Mammary epithelial cell (primary cell): ENCODE measurements at regions of chr6 and their contacts with region 1.

Region 1: GRCh38 chr6:39980839-39981580 is 46.7 kb upstream of the MOCS1 start:
- DNase-seq: peak; percentile 31
- H3K4me3 ChIP-seq: no peak overlapping the region
- H3K27ac ChIP-seq: no peak overlapping the region
- H3K4me1 ChIP-seq: no peaks in the 10 kb centered on the region
- H3K27me3 ChIP-seq: no peaks in the 10 kb centered on the region
- CTCF ChIP-seq: peak; percentile 47 to 66

Region 2: GRCh38 chr6:39377539-39377950 is 603.5 kb before region 1 on chr6:
- CTCF ChIA-PET with region 1: no interaction called
- dilution Hi-C with region 1: no loop called
- in situ Hi-C with region 1: no loop called
- intact Hi-C with region 1: loop called (anchors 1 kb)
- DNase-seq: peak; percentile 42
- H3K4me3 ChIP-seq: no peak overlapping the region
- H3K27ac ChIP-seq: no peak overlapping the region
- H3K4me1 ChIP-seq: no peaks in the 10 kb centered on the region
- H3K27me3 ChIP-seq: no peaks in the 10 kb centered on the region
- CTCF ChIP-seq: peak; percentile 74 to 90

Region 3: GRCh38 chr6:40054602-40055001 is 73.6 kb after region 1 on chr6:
- CTCF ChIA-PET with region 1: no interaction called
- dilution Hi-C with region 1: loop called (anchors 5 kb)
- in situ Hi-C with region 1: no loop called
- intact Hi-C with region 1: no loop called
- DNase-seq: peak; percentile 75
- H3K4me3 ChIP-seq: no peak overlapping the region
- H3K27ac ChIP-seq: no peak overlapping the region
- H3K4me1 ChIP-seq: peaks cover 10% of the 10 kb centered on the region
- H3K27me3 ChIP-seq: no peaks in the 10 kb centered on the region
- CTCF ChIP-seq: no peak

Region 4: DNA sequence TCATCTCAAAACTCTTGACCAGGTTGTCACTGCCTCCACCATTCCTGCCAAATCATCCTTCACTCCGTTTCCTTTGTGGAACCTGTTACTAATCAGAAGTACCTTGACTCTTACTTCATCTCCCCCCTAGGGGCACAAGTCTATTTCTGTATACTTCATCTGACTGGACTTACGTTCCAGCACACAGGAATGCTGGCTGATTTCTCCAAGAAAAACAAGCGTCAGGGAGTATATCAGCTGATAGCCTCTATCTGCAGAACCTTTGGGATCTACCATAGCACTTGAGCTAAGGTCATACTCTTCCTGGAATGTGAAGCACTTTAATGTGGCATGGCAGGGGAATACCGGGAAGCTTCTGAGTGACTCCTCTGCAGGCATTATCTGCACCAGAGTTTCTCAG is 131.3 kb after region 1 on chr6:
- CTCF ChIA-PET with region 1: no interaction called
- dilution Hi-C with region 1: no loop called
- in situ Hi-C with region 1: no loop called
- intact Hi-C with region 1: no loop called
- DNase-seq: no peak
- H3K4me3 ChIP-seq: no peak overlapping the region
- H3K27ac ChIP-seq: no peak overlapping the region
- H3K4me1 ChIP-seq: no peaks in the 10 kb centered on the region
- H3K27me3 ChIP-seq: no peaks in the 10 kb centered on the region
- CTCF ChIP-seq: no peak

Region 5: DNA sequence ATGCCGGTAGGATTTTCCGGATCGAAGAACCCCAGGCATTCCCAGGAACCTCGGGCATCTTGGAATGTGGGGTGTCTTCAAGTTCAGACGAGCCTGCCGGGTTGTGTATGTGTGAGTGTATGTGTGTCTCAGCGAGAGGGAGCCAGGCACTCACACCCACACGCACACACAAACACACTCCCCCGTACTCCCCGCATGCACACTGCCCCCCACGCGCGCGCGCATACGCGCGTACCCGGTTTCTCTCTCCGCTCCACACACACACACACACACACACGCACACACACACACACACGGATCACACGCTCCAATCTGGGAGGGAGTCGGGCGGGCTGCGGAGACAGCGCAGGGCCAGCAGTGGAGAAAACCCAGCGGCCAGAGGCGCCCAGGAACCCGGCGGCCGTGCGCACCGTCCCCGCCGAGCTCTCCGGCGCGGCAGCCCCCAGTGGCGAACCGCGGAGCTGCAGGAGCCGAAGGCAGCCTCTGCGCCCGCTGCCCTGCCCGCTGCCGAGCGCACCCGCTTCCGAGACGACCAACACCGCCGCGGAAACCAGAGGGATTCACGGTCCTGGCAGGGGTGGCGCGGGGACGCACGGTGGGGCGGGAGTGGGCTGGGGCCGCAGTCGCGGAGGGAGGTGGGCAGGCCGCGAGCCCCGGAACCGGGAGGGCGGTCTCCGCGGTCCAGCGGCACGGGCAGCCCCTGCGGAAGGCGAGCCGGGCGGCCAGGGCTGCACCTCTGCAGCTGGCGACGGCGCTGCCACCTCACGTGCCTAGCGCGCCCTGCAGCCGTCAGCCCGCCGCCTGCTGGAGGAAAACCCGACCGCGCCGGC is 606.4 kb after region 1 on chr6 and contains the start of gene LRFN2:
- CTCF ChIA-PET with region 1: no interaction called
- dilution Hi-C with region 1: no loop called
- in situ Hi-C with region 1: no loop called
- intact Hi-C with region 1: loop called (anchors 5 kb)
- DNase-seq: peak; percentile 70
- H3K4me3 ChIP-seq: peak within 1 kb of the TSS in 2 of 3 experiments; percentile 46 to 48
- H3K27ac ChIP-seq: no peak within 1 kb of the TSS
- H3K4me1 ChIP-seq: peaks cover 9% of the 10 kb centered on the region
- H3K27me3 ChIP-seq: peaks cover 8% of the 10 kb centered on the region
- CTCF ChIP-seq: peak; percentile 47 to 65
- total RNA-seq, gene LRFN2: not detected

Region 6: GRCh38 chr6:41027799-41028628 is 1047.0 kb after region 1 on chr6:
- CTCF ChIA-PET with region 1: no interaction called
- dilution Hi-C with region 1: no loop called
- in situ Hi-C with region 1: loop called in 1 of 2 experiments (anchors 25 kb)
- intact Hi-C with region 1: loop called (anchors 5 kb)
- DNase-seq: peak; percentile 63
- H3K4me3 ChIP-seq: peak overlapping the region; percentile 30 to 46 (median 45)
- H3K27ac ChIP-seq: peak overlapping the region; percentile 3
- H3K4me1 ChIP-seq: peaks cover 32% of the 10 kb centered on the region
- H3K27me3 ChIP-seq: no peaks in the 10 kb centered on the region
- CTCF ChIP-seq: peak; percentile 89 to 99